ENCODE measurements at regions of chr2 and their contacts with region 1.

Region 1: DNA sequence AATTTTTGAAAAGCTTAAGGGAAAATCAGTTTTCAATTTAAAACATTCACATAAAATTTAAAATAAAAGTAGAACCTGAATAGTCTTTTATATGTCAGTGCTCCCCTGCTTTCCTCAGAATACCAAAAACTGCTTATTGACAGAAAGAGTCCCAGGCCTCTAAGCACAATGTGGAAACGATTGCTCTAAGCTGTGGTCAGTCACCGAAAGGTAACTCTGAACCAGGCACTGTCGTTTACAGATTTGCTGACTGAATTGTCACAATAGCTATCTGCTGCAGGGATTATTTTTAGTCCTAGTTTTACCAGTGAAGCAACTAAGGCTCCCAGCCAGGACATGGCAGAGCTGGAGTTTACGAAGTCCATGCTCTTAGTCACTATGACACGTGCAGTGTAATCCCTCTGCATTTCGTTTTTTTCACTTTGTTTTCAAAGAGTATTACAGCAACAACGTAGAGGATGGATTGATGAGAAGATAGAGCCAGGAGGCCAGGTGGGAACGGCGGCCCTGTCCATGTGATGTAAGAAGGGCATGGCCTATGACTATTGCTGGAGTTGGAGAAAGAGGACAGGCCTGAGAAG is 28.1 kb upstream of the TMEM247 start:
- DNase-seq: no peak
- H3K4me3 ChIP-seq: no peak overlapping the region
- H3K27ac ChIP-seq: peak overlapping the region; percentile 49 to 76 (median 70)
- H3K4me1 ChIP-seq: peaks cover 0 to 27% (median 4%) of the 10 kb centered on the region in 3 donors
- H3K27me3 ChIP-seq: no peaks in the 10 kb centered on the region
- CTCF ChIP-seq: no peak
- POLR2A ChIP-seq: no peak

Region 2: DNA sequence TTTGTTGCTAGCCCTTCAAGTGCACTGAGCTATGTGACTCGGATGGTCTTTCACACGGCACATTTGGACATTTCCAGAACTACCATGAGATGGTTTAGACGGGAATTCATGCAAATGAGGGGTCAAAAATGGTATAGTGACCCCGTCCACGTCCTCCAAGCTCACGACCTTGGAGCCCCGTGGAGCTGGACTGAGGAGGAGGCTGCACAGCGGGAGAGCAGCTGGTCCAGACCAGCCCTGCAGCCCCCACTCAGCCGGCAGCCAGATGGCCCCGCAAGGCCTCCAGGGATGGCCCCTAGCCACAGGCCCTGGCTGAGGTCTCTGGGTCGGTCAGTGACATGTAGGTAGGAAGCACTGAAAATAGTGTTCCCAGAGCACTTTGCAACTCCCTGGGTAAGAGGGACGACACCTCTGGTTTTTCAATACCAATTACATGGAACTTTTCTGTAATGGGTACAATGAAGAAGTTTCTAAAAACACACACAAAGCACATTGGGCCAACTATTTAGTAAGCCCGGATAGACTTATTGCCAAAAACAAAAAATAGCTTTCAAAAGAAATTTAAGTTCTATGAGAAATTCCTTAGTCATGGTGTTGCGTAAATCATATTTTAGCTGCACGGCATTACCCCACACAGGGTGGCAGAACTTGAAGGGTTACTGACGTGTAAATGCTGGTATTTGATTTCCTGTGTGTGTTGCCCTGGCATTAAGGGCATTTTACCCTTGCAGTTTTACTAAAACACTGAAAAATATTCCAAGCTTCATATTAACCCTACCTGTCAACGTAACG is 65.2 kb before region 1 on chr2:
- intact Hi-C with region 1: loop called (anchors 10 kb)
- DNase-seq: no peak
- H3K4me3 ChIP-seq: no peak overlapping the region
- H3K27ac ChIP-seq: peak overlapping the region; percentile 52 to 81 (median 70)
- H3K4me1 ChIP-seq: peaks cover 15 to 38% (median 20%) of the 10 kb centered on the region in 3 donors
- H3K27me3 ChIP-seq: no peaks in the 10 kb centered on the region
- CTCF ChIP-seq: no peak
- POLR2A ChIP-seq: no peak